Lower lobe of right lung (tissue), 2 donors: ENCODE measurements at regions of chr4 and their contacts with region 1.

Region 1: GRCh38 chr4:88818631-88819470 is 121.2 kb upstream of the NAP1L5 start:
- DNase-seq: no peak
- ATAC-seq: peak in 1 of 2 donors; percentile 32
- H3K4me3 ChIP-seq: no peak overlapping the region
- H3K27ac ChIP-seq: no peak overlapping the region
- H3K4me1 ChIP-seq: peaks cover 53% of the 10 kb centered on the region
- H3K27me3 ChIP-seq: no peaks in the 10 kb centered on the region
- CTCF ChIP-seq: peak; percentile 61

Region 2: GRCh38 chr4:88523325-88524129 is 295.3 kb before region 1 on chr4 and contains the start of gene PYURF:
- intact Hi-C with region 1: no loop called
- DNase-seq: peak; percentile 98
- ATAC-seq: peak; percentile 99
- H3K4me3 ChIP-seq: peak within 1 kb of the TSS; percentile 96
- H3K27ac ChIP-seq: peak within 1 kb of the TSS; percentile 92
- H3K4me1 ChIP-seq: peaks cover 27% of the 10 kb centered on the region
- H3K27me3 ChIP-seq: no peaks in the 10 kb centered on the region
- CTCF ChIP-seq: no peak
- total RNA-seq, gene PYURF: 57.6 TPM

Region 3: DNA sequence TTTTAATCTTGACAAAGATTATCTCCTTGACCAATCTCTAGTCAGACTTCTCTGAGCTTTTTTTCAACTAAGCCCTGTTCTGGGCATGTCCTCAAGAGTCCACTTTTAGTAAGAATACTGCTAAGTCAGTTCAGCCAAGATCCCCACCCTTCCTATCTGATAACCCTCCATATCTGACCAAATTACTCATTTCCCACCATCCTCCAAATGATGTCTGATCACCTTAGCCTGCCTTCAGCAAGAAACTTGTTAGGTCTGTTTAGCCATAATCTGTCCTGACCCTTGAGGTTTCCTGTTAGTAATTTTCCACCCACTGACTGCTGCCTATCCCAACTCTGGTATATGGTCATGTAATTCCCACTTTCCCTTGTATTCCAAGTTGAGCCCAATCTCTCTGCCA is 172.9 kb after region 1 on chr4:
- intact Hi-C with region 1: no loop called
- DNase-seq: no peak
- ATAC-seq: no peak
- H3K4me3 ChIP-seq: no peak overlapping the region
- H3K27ac ChIP-seq: no peak overlapping the region
- H3K4me1 ChIP-seq: no peaks in the 10 kb centered on the region
- H3K27me3 ChIP-seq: no peaks in the 10 kb centered on the region
- CTCF ChIP-seq: no peak

Region 4: GRCh38 chr4:89024051-89024675 is 205.3 kb after region 1 on chr4:
- intact Hi-C with region 1: loop called (anchors 5 kb)
- DNase-seq: no peak
- ATAC-seq: peak; percentile 92 to 97
- H3K4me3 ChIP-seq: no peak overlapping the region
- H3K27ac ChIP-seq: no peak overlapping the region
- H3K4me1 ChIP-seq: no peaks in the 10 kb centered on the region
- H3K27me3 ChIP-seq: no peaks in the 10 kb centered on the region
- CTCF ChIP-seq: peak; percentile 84